Caki2 (cell line): ENCODE measurements at regions of chr10 and their contacts with region 1.

Region 1: DNA sequence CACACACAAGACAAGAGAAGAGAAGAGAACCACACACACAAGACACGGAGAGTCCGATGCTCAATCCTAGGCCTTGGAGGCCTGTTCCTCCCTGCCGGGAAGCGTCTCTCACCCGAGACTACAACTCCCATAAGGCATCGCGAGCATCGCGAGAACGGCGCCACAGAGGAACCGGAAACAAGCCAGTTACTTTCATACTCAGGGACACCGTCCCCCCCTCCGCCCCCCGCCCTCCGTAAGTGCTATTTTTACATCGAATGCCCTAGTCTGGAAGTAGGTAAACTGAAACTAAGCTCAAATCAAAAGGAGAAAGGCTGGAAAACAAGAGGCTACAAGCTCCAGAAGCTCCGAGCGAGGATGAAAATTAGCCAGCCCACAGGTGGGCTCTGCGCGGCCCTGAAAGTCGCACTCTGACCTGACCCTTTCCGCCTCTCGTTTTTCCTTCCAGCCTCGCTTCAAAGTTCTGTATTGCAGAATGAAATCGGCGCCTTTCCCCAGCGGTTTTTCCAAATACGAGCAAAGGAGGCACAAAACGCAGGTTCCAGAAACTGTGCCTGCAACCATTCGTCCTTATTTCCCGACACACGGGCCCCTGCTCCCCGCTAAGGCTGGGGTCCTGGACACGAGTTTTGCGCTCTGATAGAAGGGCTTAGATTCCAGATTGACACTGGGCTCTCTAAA is 11.5 kb upstream of the DNAJC12 start:
- DNase-seq: peak; percentile 90

Region 2: GRCh38 chr10:67306588-67307205 is 542.8 kb before region 1 on chr10:
- in situ Hi-C with region 1: no loop called
- DNase-seq: peak; percentile 27

Region 3: GRCh38 chr10:67912339-67912946 is 63.0 kb after region 1 on chr10:
- in situ Hi-C with region 1: loop called (anchors 10 kb)
- DNase-seq: no peak